Posterior vena cava (tissue), 2 donors: ENCODE measurements at regions of chr18 and their contacts with region 1.

Region 1: DNA sequence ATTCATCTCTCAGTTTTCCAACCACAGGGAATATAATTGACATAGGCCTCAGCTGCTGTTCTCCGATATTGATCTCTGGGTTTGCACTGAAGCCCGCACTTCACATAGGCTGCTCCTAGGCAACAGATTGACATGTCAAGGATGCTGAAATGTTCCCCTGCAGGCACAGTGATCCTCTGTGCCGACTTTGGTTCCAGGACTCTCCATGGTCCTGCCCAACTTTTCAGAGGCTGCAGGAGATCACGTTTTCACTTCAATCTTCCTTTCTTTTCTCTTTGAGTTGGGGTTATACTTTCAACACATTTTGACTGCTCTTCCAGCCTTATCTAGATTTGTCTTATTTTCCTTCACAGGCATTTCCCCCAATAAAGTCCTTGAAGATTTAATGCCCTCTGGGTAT is 1361.0 kb downstream of the DSC3 start:
- DNase-seq: no peak

Region 2: DNA sequence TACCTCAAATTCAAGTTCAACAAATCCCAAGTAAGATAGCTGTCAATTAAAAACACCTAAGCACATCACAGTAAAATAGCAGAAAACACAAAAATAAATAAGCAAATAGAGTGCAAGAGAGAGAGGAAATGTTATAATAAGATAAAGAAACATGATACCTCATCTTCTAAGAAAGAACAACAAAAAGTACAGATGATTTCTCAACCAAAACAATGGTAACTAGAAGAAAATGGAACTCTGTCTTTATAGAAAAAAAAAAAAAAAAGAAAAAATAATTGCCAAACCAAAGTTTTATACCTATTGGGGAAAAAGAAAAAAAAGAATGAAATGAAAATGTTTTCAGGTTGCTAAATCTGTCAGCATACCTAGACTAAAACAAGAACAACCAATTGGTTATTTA is 251.2 kb before region 1 on chr18:
- intact Hi-C with region 1: no loop called
- DNase-seq: no peak

Region 3: GRCh38 chr18:29560270-29560669 is 121.3 kb before region 1 on chr18:
- intact Hi-C with region 1: no loop called
- DNase-seq: no peak

Region 4: DNA sequence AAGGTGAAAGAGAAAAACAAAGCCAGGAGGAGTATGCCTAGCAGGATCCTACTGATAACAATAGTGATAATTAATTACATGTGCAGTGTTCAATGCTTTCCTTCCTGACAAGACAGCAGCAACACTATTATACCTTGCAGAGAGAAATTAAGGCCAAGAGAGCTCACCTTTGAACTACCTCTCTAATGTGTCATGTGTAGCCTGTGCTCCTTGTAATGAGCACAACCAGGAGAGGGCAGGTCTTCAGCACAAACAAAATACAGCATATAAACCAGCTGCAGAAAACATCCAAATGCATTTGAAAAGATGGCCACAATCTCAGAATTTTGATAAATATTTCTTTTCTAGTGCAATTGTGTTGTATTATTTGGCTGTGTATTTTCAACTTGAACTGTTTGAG is 64.7 kb before region 1 on chr18:
- intact Hi-C with region 1: no loop called
- DNase-seq: no peak

Region 5: GRCh38 chr18:29629493-29630042 is 52.0 kb before region 1 on chr18:
- intact Hi-C with region 1: no loop called
- DNase-seq: no peak

Region 6: DNA sequence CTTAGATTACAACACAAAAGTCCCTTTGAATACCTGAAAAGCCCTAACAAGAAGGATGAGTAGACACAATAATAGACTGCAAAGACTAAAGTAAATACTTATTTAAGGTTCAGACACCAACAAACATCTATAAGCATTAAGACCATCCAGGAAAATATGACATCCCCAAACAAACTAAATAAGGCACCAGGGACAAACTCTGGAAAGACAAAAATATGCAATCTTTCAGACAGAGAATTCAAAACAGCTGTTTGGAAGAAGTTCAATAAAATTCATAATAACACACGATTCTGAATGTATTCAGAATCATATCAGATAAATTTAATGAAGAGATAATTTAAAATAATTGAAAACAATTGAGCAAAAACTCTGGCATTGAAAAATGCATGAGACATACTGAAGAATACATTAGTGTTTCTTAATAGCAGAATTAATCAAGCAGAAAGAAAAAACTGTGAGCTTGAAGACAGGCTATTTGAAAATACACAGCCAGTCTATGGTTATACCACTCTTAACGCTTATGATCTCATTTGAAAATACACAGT is 27.8 kb before region 1 on chr18:
- intact Hi-C with region 1: loop called in 1 of 2 experiments (anchors 2 kb)
- DNase-seq: no peak